HepG2 (cell line): ENCODE measurements at regions of chr17 and their contacts with region 1.

Region 1: GRCh38 chr17:81142301-81143199 is 22.8 kb upstream of the PVALEF start:
- DNase-seq: peak; percentile 82
- ATAC-seq: peak; percentile 92
- H3K4me3 ChIP-seq: peak overlapping the region in 2 of 3 experiments; percentile 3 to 51; a peak in 2 of 6 replicates
- H3K27ac ChIP-seq: no peak overlapping the region
- H3K4me1 ChIP-seq: peaks cover 31% of the 10 kb centered on the region
- H3K27me3 ChIP-seq: no peaks in the 10 kb centered on the region
- CTCF ChIP-seq: peak; percentile 97
- EP300 ChIP-seq: no peak
- POLR2A ChIP-seq: no peak
- RAD21 ChIP-seq: peak; percentile 90

Region 2: DNA sequence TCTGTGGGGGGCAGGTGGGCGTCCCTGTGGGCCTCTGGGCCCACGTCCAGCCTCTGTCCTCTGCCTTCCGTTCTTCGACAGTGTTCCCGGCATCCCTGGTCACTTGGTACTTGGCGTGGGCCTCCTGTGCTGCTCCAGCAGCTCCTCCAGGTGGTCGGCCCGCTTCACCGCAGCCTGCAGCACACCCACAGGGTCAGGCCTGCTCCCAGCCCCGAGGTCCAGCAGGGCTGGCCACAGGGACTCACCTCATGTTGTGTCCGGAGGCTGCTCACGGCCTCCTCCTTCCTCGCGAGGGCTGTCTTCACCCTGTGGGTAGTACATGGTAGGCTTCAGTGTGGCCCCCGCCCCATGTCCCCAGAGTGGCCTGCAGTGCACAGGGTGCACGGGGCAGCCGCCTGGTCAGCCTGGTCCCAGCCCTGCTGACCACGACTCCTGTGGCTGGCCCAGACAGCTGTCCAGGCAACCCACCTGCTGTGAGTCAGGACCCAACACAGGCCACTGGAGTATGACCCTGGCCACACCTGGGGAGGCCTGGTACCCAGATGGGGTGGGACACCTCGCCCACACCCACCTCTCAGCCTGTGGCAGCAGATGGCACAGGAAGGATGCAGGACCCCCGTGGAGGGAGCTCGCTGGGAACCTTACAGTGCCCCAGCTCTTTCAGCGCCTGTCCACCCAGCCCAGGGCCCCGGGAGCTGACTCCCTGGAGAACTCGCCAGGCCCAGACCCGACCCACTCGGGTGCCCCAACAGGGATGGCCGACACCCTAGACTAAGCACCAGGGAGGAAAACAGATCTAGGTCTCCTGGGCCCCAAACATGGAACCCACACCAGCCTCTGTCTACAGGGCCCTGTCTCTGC is 47.4 kb after region 1 on chr17:
- CTCF ChIA-PET with region 1: interaction called, 11 read pairs
- POLR2A ChIA-PET with region 1: interaction called, 3 read pairs
- in situ Hi-C with region 1: loop called (anchors 5 kb)
- intact Hi-C with region 1: loop called (anchors 1 kb)
- DNase-seq: peak; percentile 29
- ATAC-seq: peak; percentile 71
- H3K4me3 ChIP-seq: no peak overlapping the region
- H3K27ac ChIP-seq: no peak overlapping the region
- H3K4me1 ChIP-seq: peaks cover 17% of the 10 kb centered on the region
- H3K27me3 ChIP-seq: peaks cover 3 to 4% of the 10 kb centered on the region in 2 experiments; a peak in 1 of 5 replicates
- CTCF ChIP-seq: peak; percentile 86
- EP300 ChIP-seq: no peak
- POLR2A ChIP-seq: no peak
- RAD21 ChIP-seq: peak; percentile 86

Region 3: DNA sequence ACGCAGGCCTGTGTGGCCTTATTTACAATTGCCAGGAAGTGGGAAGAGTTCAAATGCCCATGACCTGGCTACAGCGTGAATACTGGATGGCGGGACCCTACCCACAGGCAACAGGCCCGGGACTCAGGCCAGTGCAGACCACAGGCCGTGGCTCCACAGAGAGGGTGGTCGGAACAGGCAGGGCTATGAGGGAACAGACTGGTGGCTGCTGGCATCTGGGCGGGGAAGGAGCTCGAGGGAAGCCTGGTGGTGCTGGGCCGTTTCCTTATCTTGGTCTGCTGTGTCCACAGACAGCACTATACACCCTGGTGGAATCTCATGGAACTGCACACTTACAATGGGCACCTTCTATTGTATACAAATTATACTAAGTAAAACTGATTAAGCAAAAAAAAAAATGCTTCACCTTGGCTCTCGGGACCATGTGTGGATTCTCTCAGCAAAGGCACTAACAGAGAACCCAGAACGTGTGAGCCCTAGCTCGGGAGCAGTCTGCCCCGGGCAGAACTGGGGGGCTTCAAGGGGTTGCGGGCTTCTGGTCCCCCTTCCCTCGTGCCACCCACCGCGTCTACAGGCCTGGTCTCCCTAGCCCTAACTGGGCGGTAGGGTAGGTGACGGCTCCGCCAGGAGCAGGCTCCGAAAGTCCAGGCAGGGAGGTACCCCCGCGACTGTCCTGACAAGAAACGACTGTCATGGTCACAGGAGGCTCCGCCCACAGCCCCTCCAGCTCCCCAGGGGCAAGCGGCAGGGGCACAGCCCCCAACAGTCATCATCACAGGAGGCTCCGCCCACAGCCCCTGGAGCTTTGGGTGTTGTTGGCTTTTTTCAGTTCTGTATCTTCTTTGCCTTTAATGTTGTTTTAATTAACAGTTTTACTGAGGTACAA is 58.4 kb after region 1 on chr17:
- CTCF ChIA-PET with region 1: interaction called, 20 read pairs
- POLR2A ChIA-PET with region 1: no interaction called
- in situ Hi-C with region 1: no loop called
- intact Hi-C with region 1: loop called (anchors 5 kb)
- DNase-seq: peak; percentile 62
- ATAC-seq: peak; percentile 78
- H3K4me3 ChIP-seq: no peak overlapping the region
- H3K27ac ChIP-seq: no peak overlapping the region
- H3K4me1 ChIP-seq: no peaks in the 10 kb centered on the region
- H3K27me3 ChIP-seq: no peaks in the 10 kb centered on the region
- CTCF ChIP-seq: peak; percentile 65
- EP300 ChIP-seq: no peak
- POLR2A ChIP-seq: no peak
- RAD21 ChIP-seq: peak; percentile 39; the same call in 1 of the 2 replicates

Region 4: GRCh38 chr17:81222906-81223761 is 80.6 kb after region 1 on chr17 and contains the start of gene CEP131:
- CTCF ChIA-PET with region 1: no interaction called
- POLR2A ChIA-PET with region 1: interaction called, 4 read pairs
- in situ Hi-C with region 1: loop called (anchors 5 kb)
- intact Hi-C with region 1: loop called (anchors 5 kb)
- DNase-seq: peak; percentile 97
- ATAC-seq: peak; percentile 97
- H3K4me3 ChIP-seq: peak within 1 kb of the TSS; percentile 63 to 91 (median 87)
- H3K27ac ChIP-seq: peak within 1 kb of the TSS; percentile 56
- H3K4me1 ChIP-seq: peaks cover 32% of the 10 kb centered on the region
- H3K27me3 ChIP-seq: no peaks in the 10 kb centered on the region
- CTCF ChIP-seq: 0 out of 2 replicates have a peak, but pooled peaks have one; percentile 14
- EP300 ChIP-seq: no peak
- POLR2A ChIP-seq: peak; percentile 71 to 97
- RAD21 ChIP-seq: peak; percentile 15
- total RNA-seq, gene CEP131: 11.1 and 16.8 TPM in 2 replicates

Region 5: DNA sequence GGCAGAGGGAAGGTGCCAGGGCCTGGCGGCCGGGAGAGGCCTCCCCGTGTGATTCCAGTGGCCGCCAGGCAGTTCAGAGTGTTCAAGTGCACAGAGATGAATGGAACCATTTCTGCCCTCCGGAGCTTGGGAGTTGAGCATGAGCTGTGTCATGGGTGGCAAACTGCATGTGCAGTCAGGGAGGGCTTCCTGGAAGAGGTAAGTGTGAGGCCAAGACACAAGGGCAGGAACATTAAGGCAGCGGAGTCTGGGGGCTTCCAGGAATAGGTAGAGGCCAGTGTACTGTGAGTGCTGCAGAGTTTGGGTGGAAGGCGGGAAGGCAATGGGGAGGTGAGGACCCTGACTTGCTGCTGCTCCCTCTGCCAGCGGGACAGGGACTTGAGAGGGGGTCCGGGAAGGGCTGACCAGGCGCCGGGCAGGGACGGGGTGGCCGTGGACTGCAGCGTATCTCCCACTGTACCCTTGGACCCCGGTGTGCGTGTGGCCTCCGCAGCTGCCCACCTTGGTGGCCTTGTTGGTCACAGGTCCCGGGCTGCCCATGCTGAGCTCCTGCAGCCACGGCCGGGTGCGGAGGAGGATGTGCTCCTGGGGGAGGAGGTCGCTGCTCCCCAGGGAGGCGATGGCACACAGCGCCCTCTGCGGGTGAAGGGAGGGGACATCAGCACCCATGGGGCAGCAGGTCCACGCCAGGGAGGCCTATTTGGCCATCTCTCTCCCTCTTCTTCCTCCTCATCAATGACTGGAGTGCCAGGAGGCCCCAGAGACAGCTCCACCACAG is 87.7 kb after region 1 on chr17:
- CTCF ChIA-PET with region 1: interaction called, 12 read pairs
- POLR2A ChIA-PET with region 1: no interaction called
- in situ Hi-C with region 1: loop called (anchors 5 kb)
- intact Hi-C with region 1: no loop called
- DNase-seq: no peak
- ATAC-seq: peak; percentile 52
- H3K4me3 ChIP-seq: no peak overlapping the region
- H3K27ac ChIP-seq: no peak overlapping the region
- H3K4me1 ChIP-seq: peaks cover 13% of the 10 kb centered on the region
- H3K27me3 ChIP-seq: no peaks in the 10 kb centered on the region
- CTCF ChIP-seq: peak; percentile 90
- EP300 ChIP-seq: no peak
- POLR2A ChIP-seq: no peak
- RAD21 ChIP-seq: peak; percentile 68

Region 6: DNA sequence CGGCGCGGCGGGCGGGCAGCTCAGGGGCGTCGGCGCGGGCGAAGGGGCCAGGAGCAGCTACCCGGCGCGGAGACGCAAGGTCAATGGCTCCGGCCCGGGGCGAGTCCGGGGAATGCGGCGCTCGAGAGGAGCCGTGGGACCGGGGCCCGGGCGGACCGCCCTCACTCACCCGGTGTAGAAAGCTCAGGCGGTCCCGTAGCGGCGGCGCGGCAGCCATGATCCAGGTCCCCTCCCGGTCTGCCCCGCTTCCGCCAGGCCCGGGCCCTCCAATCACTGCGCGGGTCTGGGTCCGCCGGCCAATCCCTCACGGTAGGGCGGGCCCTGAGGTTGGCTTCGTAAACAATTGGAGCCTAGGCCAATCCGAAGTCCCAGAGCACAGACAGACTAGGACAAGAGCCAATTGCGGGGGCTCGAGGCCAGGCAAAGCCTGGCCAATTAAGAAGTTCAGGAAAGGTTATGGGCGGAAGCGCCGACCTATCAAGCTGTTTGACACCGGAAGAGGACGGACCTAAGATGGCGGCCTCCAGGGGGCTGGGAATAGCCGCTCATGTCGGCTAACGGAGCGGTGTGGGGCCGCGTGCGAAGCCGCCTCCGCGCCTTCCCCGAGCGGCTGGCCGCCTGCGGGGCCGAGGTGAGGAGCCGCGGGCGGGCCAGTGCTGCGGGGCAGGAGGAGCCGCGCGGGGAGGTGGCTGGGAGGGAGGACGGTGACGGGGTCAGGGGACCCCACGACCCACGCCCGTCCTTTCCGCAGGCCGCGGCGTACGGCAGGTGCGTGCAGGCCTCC is 96.5 kb after region 1 on chr17 and contains the starts of genes NDUFAF8 and TEPSIN:
- CTCF ChIA-PET with region 1: interaction called, 28 read pairs
- POLR2A ChIA-PET with region 1: interaction called, 6 read pairs
- in situ Hi-C with region 1: no loop called
- intact Hi-C with region 1: loop called (anchors 1 kb)
- DNase-seq: peak; percentile 100
- ATAC-seq: peak; percentile 95
- H3K4me3 ChIP-seq: peak within 1 kb of the TSS; percentile 94 to 98 (median 96)
- H3K27ac ChIP-seq: peak within 1 kb of the TSS; percentile 81
- H3K4me1 ChIP-seq: peaks cover 27% of the 10 kb centered on the region
- H3K27me3 ChIP-seq: no peaks in the 10 kb centered on the region; a peak in 1 of 5 replicates
- CTCF ChIP-seq: no peak
- EP300 ChIP-seq: no peak
- POLR2A ChIP-seq: peak; percentile 61 to 85
- RAD21 ChIP-seq: peak; percentile 63
- total RNA-seq, gene NDUFAF8: 213 and 233 TPM in 2 replicates
- total RNA-seq, gene TEPSIN: 8.5 and 18.8 TPM in 2 replicates